Panc1 (cell line): ENCODE measurements at regions of chr16 and their contacts with region 1.

Region 1: GRCh38 chr16:31202414-31203375 is at the start of gene PYCARD:
- DNase-seq: no peak
- ATAC-seq: peak; percentile 64
- H3K4me3 ChIP-seq: peak within 1 kb of the TSS; percentile 51 to 69
- H3K27ac ChIP-seq: peak within 1 kb of the TSS; percentile 71
- H3K4me1 ChIP-seq: peaks cover 22% of the 10 kb centered on the region
- H3K27me3 ChIP-seq: no peaks in the 10 kb centered on the region
- CTCF ChIP-seq: no peak
- total RNA-seq, gene PYCARD: 99.4 TPM

Region 2: DNA sequence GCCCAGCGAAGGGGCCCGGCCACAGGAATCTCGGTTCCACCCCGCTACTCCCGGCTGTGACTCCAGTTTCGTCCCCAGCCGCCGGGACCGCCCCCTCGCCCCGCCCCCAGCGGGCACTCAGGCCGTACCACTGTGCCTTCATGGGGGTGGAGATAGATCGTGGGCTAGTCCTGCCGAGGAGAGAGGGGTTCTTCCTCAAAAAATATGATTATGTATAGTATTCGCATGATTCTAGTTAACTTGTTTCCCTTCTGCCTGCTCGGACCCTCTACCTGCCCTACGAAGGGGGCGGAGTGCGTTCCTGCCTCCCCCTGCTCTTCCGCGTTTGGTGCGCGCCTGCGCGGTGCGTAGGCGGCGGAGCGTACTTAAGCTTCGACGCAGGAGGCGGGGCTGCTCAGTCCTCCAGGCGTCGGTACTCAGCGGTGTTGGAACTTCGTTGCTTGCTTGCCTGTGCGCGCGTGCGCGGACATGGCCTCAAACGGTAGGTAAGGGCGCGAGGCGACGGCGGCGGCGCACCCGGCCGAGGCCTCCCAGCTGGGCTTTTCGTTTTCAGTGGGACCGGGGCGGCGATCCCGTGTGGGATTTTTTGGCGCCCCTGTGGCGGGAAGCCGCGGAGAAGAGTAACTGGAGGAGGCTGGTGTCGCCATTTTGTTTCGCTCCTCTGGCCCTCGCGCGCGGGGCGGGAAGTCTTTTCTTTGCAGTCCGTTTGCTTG is 22.8 kb before region 1 on chr16 and contains the start of gene FUS:
- CTCF ChIA-PET with region 1: no interaction called
- POLR2A ChIA-PET with region 1: interaction called, 15 read pairs
- in situ Hi-C with region 1: no loop called
- intact Hi-C with region 1: no loop called
- DNase-seq: peak; percentile 67
- ATAC-seq: peak; percentile 77
- H3K4me3 ChIP-seq: peak within 1 kb of the TSS; percentile 60 to 99
- H3K27ac ChIP-seq: peak within 1 kb of the TSS; percentile 97
- H3K4me1 ChIP-seq: peaks cover 16% of the 10 kb centered on the region
- H3K27me3 ChIP-seq: no peaks in the 10 kb centered on the region
- CTCF ChIP-seq: no peak
- total RNA-seq, gene FUS: 441 TPM

Region 3: GRCh38 chr16:31265329-31266245 is 62.9 kb after region 1 on chr16:
- CTCF ChIA-PET with region 1: no interaction called
- POLR2A ChIA-PET with region 1: no interaction called
- in situ Hi-C with region 1: no loop called
- intact Hi-C with region 1: loop called (anchors 10 kb)
- DNase-seq: no peak
- ATAC-seq: peak; percentile 96
- H3K4me3 ChIP-seq: no peak overlapping the region
- H3K27ac ChIP-seq: peak overlapping the region; percentile 78
- H3K4me1 ChIP-seq: peaks cover 18% of the 10 kb centered on the region
- H3K27me3 ChIP-seq: no peaks in the 10 kb centered on the region
- CTCF ChIP-seq: no peak

Region 4: GRCh38 chr16:31367853-31368252 is 165.2 kb after region 1 on chr16:
- CTCF ChIA-PET with region 1: no interaction called
- POLR2A ChIA-PET with region 1: interaction called, 17 read pairs
- in situ Hi-C with region 1: no loop called
- intact Hi-C with region 1: no loop called
- DNase-seq: no peak
- ATAC-seq: no peak
- H3K4me3 ChIP-seq: no peak overlapping the region
- H3K27ac ChIP-seq: no peak overlapping the region
- H3K4me1 ChIP-seq: no peaks in the 10 kb centered on the region
- H3K27me3 ChIP-seq: no peaks in the 10 kb centered on the region
- CTCF ChIP-seq: no peak

Region 5: GRCh38 chr16:31440516-31441184 is 238.0 kb after region 1 on chr16:
- CTCF ChIA-PET with region 1: interaction called, 4 read pairs
- POLR2A ChIA-PET with region 1: no interaction called
- in situ Hi-C with region 1: no loop called
- intact Hi-C with region 1: loop called (anchors 2 kb)
- DNase-seq: no peak
- ATAC-seq: no peak
- H3K4me3 ChIP-seq: no peak overlapping the region
- H3K27ac ChIP-seq: no peak overlapping the region
- H3K4me1 ChIP-seq: no peaks in the 10 kb centered on the region
- H3K27me3 ChIP-seq: no peaks in the 10 kb centered on the region
- CTCF ChIP-seq: no peak